Mammary epithelial cell (primary cell): ENCODE measurements at regions of chr9 and their contacts with region 1.

Region 1: GRCh38 chr9:131755541-131756198 is 15.8 kb upstream of the RAPGEF1 start:
- DNase-seq: peak; percentile 65
- H3K4me3 ChIP-seq: no peak overlapping the region
- H3K27ac ChIP-seq: no peak overlapping the region
- H3K4me1 ChIP-seq: no peaks in the 10 kb centered on the region
- H3K27me3 ChIP-seq: no peaks in the 10 kb centered on the region
- CTCF ChIP-seq: peak; percentile 91 to 95

Region 2: DNA sequence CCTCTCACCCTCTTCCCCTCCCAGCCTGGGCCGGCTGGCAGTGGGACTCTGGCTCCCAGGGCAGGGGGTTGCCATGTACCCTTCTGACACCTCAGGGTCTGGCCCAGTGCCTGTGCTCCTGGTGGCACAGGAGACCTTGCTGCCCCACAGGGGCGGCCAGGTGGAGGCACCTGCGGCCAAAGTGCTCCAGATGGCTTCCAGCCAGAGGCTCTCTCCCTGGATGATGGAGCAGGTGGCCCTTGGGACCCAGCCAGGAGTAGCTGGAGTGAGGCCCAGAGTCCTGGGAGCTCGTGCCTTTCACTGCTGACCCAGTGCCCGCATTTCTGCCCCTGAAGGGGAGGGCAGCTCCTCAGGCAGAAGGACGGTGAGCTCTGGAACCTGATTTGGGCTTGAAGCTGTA is 493.5 kb after region 1 on chr9:
- CTCF ChIA-PET with region 1: interaction called, 4 read pairs
- dilution Hi-C with region 1: no loop called
- in situ Hi-C with region 1: loop called (anchors 5 to 10 kb)
- intact Hi-C with region 1: loop called (anchors 2 kb)
- DNase-seq: no peak
- H3K4me3 ChIP-seq: no peak overlapping the region
- H3K27ac ChIP-seq: no peak overlapping the region
- H3K4me1 ChIP-seq: no peaks in the 10 kb centered on the region
- H3K27me3 ChIP-seq: no peaks in the 10 kb centered on the region
- CTCF ChIP-seq: no peak